RWPE1 (cell line): ENCODE measurements at regions of chr11 and their contacts with region 1.

Region 1: DNA sequence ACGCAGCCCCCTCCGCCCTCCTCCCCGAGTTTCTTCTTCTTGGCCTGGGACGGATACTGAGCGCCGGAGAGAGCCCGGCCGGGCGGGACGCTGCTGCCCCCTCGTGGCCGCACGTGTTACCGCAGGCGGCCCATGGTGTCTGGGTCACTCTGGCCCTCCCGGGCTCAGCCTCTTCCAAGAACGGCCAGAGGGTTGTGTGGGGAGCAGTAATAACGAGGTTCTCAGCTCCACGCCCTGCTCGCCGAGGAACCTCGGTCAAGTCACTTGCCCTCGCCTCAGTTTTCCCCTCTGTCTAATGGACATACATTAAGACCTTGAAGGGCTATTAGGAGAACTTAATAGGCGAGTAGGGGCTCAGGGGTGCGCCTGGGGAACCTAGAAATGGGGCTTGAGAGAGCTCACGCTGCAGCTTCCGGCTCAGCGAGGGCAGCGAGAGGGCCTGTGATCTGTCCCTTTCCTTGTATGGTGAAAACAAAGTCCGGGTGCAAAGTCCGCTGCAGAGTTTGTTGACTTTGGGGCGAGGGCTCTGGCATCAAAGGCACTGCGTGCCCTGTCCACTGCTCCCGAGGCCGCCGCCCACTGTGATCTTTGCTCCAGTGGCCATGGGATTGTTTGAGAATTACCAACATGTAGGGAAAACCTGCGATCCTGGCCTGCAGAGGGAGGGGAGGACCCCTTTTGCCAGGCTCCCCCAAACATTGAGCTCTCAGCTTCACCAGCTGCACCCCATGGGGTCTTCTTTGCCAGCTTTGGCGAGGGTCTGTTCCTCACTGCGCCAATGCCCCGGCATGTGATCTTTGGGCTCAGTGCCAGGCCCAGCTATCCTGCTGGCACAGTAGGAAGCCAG is 14.4 kb upstream of the LRP5 start:
- DNase-seq: peak; percentile 74
- H3K27ac ChIP-seq: no peak overlapping the region
- CTCF ChIP-seq: peak; percentile 97

Region 2: GRCh38 chr11:68257475-68258362 is 40.3 kb before region 1 on chr11:
- CTCF ChIA-PET with region 1: interaction called, 58 read pairs
- POLR2A ChIA-PET with region 1: interaction called, 3 read pairs
- DNase-seq: peak; percentile 74
- H3K27ac ChIP-seq: peak overlapping the region; percentile 57
- CTCF ChIP-seq: peak; percentile 87

Region 3: GRCh38 chr11:68271781-68272608 is 26.0 kb before region 1 on chr11 and contains the start of gene C11orf24:
- CTCF ChIA-PET with region 1: interaction called, 19 read pairs
- POLR2A ChIA-PET with region 1: interaction called, 3 read pairs
- DNase-seq: peak; percentile 98
- H3K27ac ChIP-seq: peak within 1 kb of the TSS; percentile 96
- CTCF ChIP-seq: no peak

Region 4: GRCh38 chr11:68414496-68415220 is 116.6 kb after region 1 on chr11:
- CTCF ChIA-PET with region 1: no interaction called
- POLR2A ChIA-PET with region 1: no interaction called
- DNase-seq: no peak
- H3K27ac ChIP-seq: no peak overlapping the region
- CTCF ChIP-seq: no peak